Right ventricle myocardium superior (tissue), 1 donor: ENCODE measurements at regions of chr20 and their contacts with region 1.

Region 1: DNA sequence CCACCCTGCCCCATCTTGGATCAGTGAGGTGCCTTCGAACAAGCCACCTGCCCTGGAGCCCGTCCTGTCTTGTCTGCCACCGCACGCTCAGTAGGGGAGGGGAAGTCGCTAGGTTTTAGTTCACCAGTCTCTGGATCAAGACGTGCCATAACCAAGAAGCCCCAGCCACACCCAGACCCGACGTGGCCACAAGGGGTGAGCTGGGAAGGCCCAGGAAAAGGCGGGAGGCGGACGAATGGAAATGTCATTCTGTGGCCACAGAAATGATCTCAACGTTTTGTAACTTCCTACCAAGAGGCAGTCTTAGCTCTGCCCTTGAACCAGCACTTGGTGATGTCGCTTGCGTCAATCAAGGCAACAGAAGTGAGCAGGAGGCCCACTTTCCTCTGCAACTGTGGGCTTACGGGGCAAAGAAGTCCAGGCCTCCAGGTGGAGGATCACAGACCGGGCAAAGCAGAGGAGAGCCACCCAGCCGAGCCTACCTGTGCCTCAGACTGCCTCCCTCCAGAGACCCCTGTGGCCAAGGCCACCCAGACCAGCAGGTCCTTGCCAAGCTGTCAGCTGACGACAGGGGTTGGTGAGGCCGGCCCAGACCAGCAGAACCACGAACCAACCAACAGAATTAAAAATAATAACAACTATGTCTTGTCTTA is 14.5 kb downstream of the GMEB2 start:
- DNase-seq: peak; percentile 32
- ATAC-seq: peak; percentile 29

Region 2: DNA sequence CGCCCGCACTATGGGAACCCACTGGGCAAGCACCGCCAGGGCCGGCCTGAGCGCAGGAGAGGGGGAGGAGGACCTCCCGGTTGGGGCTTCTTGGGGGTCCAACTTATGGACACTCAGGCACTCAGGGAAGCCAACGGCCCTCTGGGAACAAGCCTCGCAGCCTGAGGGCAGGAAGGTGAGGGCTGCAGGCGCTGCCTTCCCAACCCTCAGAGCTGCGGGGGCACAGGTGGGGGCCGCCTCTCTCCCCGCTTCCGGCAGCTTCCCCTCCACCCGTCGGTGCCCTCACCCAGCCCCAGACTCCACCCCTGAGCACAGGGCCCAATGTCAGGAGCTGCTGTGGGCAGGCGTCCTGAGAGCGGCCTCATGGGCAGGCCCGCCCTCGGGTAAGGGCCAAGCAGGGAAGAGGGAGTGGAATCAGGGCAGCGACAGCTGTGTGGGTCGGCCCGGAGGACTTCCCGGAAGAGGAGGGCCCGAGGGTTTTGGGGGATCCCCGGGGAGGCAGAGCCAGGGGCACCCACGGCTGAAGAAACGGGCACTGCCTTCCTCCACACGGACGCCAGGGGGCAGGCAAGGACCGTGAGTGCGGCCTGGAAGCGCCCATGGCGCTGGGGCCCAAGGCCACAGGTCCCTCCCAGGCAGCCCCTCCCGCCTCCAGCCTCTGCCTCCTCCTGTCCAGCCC is 74.7 kb before region 1 on chr20:
- intact Hi-C with region 1: loop called (anchors 5 kb)
- DNase-seq: peak; percentile 92
- ATAC-seq: peak; percentile 93

Region 3: DNA sequence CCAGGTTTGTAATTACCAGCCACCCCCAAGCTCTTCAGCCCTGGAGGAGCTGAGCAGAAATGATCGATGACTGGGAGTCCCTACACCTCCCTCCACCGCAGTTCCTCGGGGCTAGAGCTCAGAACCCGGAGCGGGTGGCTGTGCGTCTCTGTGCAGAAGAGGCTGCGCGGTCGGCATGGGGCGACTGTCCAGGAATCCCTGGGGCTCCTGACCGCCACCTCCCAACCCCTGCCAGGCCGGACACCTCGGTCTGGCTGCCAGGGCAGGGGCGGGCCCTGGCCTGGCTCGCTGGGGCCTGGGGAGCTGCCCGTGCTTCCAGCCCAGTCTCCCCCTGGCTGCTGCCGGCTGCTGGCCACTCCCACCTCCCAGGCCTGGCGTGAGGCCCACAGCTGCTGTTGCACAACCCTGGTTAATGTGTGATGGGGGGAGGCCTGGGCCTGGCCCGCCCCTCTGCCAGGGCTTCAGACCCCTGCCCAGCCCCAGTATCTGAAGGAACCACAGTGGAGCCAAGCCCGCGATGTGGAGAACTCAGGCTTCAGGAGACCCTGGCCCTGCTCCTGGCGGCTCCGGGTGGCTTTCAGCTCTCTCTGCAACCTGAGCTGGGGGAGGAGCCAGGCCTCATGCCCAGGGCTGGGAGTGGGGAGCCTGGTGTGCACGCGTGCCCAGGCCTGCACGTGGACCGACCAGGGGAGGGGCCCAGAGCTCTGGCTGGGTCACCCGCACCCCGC is 128.4 kb after region 1 on chr20:
- intact Hi-C with region 1: no loop called
- DNase-seq: peak; percentile 97
- ATAC-seq: peak; percentile 81